ENCODE measurements at regions of chr2 and their contacts with region 1.

Region 1: DNA sequence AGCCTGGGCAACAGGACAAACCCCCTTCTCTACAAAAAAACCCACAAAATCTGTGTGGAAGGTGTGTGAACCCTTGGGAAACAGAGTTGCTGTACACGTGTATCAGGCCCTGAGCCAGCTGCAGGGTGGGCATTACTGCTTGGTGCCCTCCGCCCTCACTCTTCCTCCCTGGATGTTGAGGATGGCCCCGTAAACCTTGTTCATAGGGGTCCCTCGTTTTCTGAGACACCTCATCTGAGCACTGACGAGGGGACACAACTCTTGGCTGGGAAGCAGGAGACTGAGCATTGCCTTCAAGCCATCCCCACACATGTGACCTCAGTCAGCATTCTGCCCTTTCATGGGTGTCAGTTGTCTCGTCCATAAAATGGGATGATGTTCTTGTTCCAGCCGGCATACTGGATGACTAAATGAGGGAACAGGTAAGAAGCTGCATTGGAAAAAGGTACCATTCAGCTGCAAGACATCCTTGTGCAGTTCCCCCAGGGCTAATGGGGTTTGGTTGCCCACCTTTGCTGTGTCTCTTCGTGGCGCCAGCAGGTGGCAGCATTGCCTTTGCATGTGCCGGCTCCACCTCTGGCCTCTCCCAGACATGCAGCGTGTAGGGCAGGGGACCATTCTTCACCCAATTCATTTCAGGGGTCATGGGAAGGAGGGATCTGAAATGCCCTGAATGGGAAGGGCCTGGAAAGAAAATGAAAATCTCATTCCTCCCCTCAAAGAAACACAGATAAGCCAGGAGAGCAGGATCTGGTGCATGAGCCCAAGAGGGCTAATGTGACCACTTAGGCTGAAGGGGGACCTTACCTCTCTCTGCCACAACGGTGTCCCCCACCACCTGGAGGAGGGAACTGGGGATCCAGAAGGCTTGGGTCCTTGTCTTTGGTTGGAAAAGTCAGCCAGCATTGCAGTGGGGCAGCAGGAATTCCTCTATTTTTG is 36.4 kb upstream of the HAAO start:
- H3K4me3 ChIP-seq: no peak overlapping the region
- H3K27ac ChIP-seq: no peak overlapping the region
- H3K4me1 ChIP-seq: no peaks in the 10 kb centered on the region
- CTCF ChIP-seq: peak; percentile 87

Region 2: DNA sequence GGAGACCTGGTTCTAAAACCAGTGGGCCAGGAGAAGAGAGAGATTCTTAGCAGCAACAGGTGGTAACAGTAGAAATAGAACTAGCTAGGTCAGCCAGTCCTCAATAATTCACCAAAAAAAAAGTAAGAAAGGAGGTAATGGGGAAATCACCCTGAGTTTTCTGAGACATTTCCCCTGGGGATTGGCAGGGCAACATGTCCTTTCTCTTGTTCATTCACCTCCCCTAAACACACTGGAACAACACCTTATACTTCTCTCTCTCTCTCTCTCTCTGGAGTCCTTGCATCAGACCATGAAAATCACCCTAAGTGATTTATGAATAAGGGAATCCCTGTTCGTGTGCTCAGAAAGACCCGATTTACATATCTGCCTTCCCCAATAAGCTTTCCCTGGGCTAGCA is 532.5 kb before region 1 on chr2:
- CTCF ChIA-PET with region 1: no interaction called
- POLR2A ChIA-PET with region 1: no interaction called
- H3K4me3 ChIP-seq: no peak overlapping the region
- H3K27ac ChIP-seq: no peak overlapping the region
- H3K4me1 ChIP-seq: no peaks in the 10 kb centered on the region
- CTCF ChIP-seq: no peak

Region 3: GRCh38 chr2:42810121-42810970 is 18.4 kb before region 1 on chr2:
- CTCF ChIA-PET with region 1: interaction called, 12 read pairs
- POLR2A ChIA-PET with region 1: no interaction called
- H3K4me3 ChIP-seq: peak overlapping the region; percentile 86
- H3K27ac ChIP-seq: peak overlapping the region; percentile 96
- H3K4me1 ChIP-seq: no peaks in the 10 kb centered on the region
- CTCF ChIP-seq: 0 out of 2 replicates have a peak, but pooled peaks have one; percentile 10

Region 4: DNA sequence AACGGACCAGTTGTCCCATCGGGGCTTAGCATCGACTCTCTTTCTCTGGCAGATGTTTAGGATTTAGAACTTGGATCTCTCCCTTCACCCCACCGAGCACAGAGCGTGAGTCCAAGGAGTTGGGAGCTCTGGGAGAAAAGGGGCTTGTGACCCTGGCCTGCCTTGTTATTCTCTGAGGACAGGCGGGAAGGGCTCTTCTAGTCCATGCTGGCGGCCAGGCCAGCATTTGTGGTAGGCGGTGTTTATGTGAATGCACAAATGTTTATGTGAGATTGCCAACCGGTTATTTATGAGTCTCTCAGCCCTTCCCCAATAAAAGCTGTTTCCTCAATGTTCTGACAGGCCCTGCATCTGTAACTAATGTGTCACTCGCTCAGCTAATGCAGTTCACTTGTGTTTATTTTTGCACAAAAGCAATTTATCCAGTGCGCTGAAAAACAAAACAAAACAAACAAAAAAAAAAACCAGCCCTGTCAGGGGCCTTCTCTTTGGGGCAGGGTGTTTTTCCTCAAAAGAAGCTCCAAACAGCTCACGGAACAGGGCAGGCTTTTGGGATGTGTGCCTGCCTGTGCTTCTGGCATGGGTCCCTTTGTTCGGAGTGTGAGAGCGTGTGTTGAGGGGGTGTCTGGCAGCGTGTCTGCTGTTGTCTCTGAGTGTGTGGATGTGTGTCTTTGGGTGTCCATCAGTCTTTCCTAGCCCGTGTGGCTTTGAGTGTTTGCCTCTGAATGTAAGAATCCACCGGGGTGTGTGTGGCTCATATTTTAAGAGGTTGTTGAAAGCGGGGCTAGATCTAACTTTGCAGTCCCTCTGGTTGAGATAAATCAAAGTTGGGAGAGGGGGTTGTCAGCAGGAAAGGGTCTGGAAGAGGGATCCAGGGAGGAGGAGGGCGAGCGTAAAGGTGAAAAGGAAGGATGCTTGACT is 16.4 kb after region 1 on chr2:
- CTCF ChIA-PET with region 1: interaction called, 19 read pairs
- POLR2A ChIA-PET with region 1: interaction called, 3 read pairs
- H3K4me3 ChIP-seq: no peak overlapping the region
- H3K27ac ChIP-seq: no peak overlapping the region
- H3K4me1 ChIP-seq: peaks cover 6% of the 10 kb centered on the region; the same call in 1 of the 2 replicates
- CTCF ChIP-seq: no peak

Region 5: DNA sequence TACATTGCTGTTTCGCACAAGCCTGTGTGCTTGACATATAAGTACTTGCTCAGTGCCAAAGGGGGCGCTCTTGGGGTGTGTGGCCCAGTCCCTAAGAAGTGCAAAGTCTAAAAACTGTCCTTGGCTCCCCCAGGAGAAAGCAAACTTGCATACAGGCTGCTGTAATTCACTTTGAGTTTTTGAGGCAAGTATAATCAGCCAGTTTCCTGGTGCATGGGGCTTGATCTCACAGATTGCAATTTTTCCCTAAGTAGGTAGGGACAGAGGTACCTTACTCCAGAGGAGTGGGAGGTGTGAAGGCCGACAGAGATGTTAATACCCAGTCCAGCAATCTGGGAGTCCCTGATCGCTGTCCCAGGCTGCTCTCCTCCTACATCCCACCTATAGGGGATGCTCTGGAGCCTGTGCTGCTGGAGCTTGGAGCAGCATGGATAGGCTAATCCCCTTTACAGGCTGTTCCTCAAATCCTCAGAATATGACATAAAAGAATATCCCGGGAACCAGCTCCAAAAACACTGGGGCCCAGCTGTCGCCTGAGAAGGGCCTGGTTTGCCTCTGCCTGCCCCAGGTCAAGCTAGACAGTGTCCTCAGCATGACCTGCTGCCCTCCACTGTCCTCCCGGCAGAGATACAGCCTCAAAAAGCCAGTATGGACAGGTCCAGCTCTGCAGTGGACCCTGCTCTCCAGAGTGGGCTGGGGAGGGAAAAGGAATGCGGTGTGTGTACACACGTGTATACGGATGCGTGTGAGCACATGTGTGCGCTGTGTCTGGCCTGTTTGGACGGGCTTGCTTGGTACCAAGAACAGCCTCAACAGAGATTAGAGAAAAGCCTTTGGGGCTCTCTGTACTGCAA is 100.2 kb after region 1 on chr2:
- CTCF ChIA-PET with region 1: interaction called, 12 read pairs
- POLR2A ChIA-PET with region 1: no interaction called
- H3K4me3 ChIP-seq: no peak overlapping the region
- H3K27ac ChIP-seq: no peak overlapping the region; the same call in 1 of the 2 replicates
- H3K4me1 ChIP-seq: peaks cover 6% of the 10 kb centered on the region
- CTCF ChIP-seq: 0 out of 2 replicates have a peak, but pooled peaks have one; percentile 25

Region 6: DNA sequence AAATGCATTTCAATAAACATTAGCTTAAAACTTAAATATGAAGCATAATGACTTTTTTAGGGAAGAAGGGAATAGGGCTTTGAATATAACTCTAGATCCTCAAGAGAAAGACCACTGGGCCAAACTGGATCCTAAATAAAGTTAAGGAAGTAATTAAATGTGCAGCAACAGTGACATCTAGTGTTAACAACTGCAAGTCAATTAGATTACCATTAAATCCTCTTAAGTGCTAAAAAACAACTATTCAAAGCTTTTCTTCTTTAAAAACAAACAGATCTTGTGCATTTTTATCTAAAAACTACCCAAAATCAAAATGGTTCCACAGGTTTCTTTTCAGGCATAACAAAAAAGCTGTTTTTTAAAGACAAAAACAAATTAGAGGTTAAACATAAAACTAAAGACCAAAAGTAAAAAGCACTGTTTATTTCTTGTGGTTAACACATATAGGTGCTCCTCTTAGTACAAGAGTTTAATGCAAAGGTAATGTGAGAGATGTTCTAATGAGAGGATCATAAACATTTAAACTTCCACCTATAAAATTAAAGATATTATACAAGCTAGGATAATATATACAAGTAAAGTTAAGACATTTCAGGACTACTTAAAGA is 655.7 kb after region 1 on chr2:
- CTCF ChIA-PET with region 1: interaction called, 13 read pairs
- POLR2A ChIA-PET with region 1: no interaction called
- H3K4me3 ChIP-seq: no peak overlapping the region
- H3K27ac ChIP-seq: no peak overlapping the region
- H3K4me1 ChIP-seq: no peaks in the 10 kb centered on the region
- CTCF ChIP-seq: no peak; the same call in 1 of the 2 replicates